ENCODE measurements at regions of chr17 and their contacts with region 1.

Region 1: DNA sequence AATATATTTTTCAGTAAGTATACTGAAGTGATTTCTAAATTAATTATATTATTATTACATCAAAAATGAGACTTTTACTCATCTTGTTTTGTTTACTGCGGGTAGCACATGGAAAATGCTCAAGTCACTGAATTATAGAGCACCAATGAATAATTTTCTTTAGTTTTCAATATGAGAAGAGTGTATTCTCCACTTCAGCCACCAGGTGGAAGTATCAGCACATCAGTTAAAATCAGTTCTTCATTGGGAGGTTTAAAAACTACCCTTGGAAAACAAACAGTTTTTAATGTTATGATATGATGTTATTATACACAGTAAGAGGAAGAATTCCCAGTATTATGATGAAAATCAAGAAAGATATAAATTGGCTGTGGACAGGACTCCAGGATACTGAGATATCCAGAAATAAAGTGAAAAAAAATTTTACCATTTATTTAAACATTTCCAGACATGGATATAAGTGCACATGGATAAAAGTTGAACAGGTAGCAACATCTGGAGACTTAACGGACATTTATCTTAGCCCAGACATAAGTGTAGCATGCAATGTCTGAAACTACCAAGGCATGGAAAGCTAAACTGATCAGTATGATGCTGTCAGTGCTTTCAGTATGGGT is 467.3 kb downstream of the KCNJ2 start:
- DNase-seq: peak; percentile 80
- ATAC-seq: no peak; the same call in 1 of the 2 replicates
- H3K4me3 ChIP-seq: no peak overlapping the region
- H3K27ac ChIP-seq: no peak overlapping the region
- H3K4me1 ChIP-seq: no peaks in the 10 kb centered on the region
- H3K27me3 ChIP-seq: peaks cover 68% of the 10 kb centered on the region
- CTCF ChIP-seq: peak; percentile 86

Region 2: GRCh38 chr17:70552230-70552981 is 84.2 kb before region 1 on chr17:
- CTCF ChIA-PET with region 1: no interaction called
- POLR2A ChIA-PET with region 1: no interaction called
- intact Hi-C with region 1: no loop called
- DNase-seq: peak; percentile 80
- ATAC-seq: peak; percentile 78
- H3K4me3 ChIP-seq: no peak overlapping the region
- H3K27ac ChIP-seq: no peak overlapping the region
- H3K4me1 ChIP-seq: no peaks in the 10 kb centered on the region
- H3K27me3 ChIP-seq: no peaks in the 10 kb centered on the region
- CTCF ChIP-seq: peak; percentile 81

Region 3: GRCh38 chr17:70655176-70655958 is 18.7 kb after region 1 on chr17:
- CTCF ChIA-PET with region 1: no interaction called
- POLR2A ChIA-PET with region 1: no interaction called
- intact Hi-C with region 1: no loop called
- DNase-seq: no peak
- ATAC-seq: no peak
- H3K4me3 ChIP-seq: no peak overlapping the region
- H3K27ac ChIP-seq: no peak overlapping the region
- H3K4me1 ChIP-seq: no peaks in the 10 kb centered on the region
- H3K27me3 ChIP-seq: peaks cover 75% of the 10 kb centered on the region
- CTCF ChIP-seq: no peak

Region 4: GRCh38 chr17:71084219-71084618 is 447.6 kb after region 1 on chr17:
- CTCF ChIA-PET with region 1: no interaction called
- POLR2A ChIA-PET with region 1: no interaction called
- intact Hi-C with region 1: loop called (anchors 2 kb)
- DNase-seq: peak; percentile 77
- ATAC-seq: peak; percentile 70
- H3K4me3 ChIP-seq: no peak overlapping the region
- H3K27ac ChIP-seq: no peak overlapping the region
- H3K4me1 ChIP-seq: no peaks in the 10 kb centered on the region
- H3K27me3 ChIP-seq: no peaks in the 10 kb centered on the region
- CTCF ChIP-seq: peak; percentile 85

Region 5: DNA sequence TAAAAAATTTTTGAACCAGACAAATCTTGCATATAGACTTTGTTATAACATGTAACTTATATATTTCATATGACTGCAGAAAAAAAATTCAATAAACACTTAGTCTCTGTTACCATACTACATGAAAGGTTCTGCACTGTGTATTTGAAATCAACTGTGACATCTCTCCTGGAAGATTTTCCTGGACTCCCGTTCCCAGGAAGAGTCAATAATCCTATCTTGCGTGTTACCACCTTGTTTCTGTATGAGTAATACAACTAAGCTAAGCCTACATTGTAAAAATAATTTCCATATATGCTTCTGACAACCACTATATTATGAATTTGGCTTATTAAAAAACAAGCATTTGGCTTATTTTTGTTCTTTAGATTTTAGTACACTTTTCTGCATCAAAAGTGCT is 818.6 kb after region 1 on chr17:
- CTCF ChIA-PET with region 1: no interaction called
- POLR2A ChIA-PET with region 1: no interaction called
- intact Hi-C with region 1: loop called (anchors 5 kb)
- DNase-seq: peak; percentile 79
- ATAC-seq: peak; percentile 90
- H3K4me3 ChIP-seq: no peak overlapping the region
- H3K27ac ChIP-seq: peak overlapping the region; percentile 56
- H3K4me1 ChIP-seq: peaks cover 20% of the 10 kb centered on the region
- H3K27me3 ChIP-seq: no peaks in the 10 kb centered on the region
- CTCF ChIP-seq: no peak

Measured in PC-3 (cell line).